Endothelial cell of umbilical vein (primary cell): ENCODE measurements at regions of chr7 and their contacts with region 1.

Region 1: DNA sequence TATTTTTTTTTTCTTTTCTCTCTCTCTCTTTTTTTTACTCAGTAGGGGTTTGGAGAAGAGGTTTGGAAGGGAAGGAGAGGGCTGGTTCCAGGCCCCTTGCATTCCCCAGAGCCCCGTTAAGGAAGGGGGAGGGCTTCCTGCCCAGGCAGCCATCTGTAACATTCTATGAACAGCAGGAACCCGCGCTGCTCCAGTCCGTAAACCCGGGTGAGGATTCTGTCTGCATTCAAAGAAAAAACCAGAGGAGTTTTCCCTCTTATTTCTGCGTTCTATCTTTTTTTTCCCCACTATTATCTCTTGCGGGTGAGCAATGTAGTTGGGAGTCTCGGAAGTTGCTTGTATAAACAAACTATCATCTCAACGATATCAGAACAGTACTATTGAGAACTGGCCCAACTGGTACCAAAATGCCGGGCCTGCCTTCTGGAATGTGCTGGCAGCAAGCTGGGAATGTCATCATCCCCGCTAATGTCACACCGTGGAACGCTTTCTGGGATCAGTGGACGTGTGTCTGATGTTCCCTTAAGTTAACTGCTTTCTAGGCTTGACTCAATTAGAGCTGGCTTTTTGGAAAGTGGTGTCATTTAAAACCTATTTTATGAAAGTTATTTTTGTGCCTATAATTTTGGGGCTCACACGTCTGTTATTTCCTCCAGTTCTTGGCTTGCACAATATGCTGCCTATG is 153.1 kb upstream of the MEOX2 start:
- DNase-seq: peak; percentile 78
- H3K4me3 ChIP-seq: peak overlapping the region in 2 of 3 experiments; percentile 2 to 37
- H3K27ac ChIP-seq: peak overlapping the region; percentile 42
- H3K4me1 ChIP-seq: peaks cover 14% of the 10 kb centered on the region
- H3K27me3 ChIP-seq: no peaks in the 10 kb centered on the region
- CTCF ChIP-seq: no peak
- POLR2A ChIP-seq: no peak

Region 2: DNA sequence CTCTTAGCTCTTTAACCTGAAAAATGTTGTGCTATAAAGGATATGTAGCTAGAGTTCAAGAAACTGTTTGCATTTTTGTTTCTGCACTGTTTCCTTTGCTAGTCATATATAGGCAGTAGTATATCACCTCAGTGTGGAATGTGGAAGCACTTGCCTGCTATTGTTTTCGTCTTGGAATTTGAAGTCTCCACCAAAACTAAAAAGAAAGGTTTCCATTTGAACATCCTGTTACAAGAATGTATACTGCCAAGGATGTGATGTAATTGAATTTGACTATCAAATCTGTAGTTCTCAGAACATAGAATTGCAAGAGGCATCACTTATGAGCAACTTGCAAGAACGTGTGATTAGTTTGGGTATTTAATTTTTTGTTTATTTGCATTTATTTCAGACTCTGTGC is 102.0 kb before region 1 on chr7:
- CTCF ChIA-PET with region 1: no interaction called
- POLR2A ChIA-PET with region 1: no interaction called
- dilution Hi-C with region 1: no loop called
- intact Hi-C with region 1: loop called (anchors 1 kb)
- DNase-seq: peak; percentile 85
- H3K4me3 ChIP-seq: no peak overlapping the region
- H3K27ac ChIP-seq: no peak overlapping the region
- H3K4me1 ChIP-seq: no peaks in the 10 kb centered on the region
- H3K27me3 ChIP-seq: no peaks in the 10 kb centered on the region
- CTCF ChIP-seq: no peak
- POLR2A ChIP-seq: no peak

Region 3: DNA sequence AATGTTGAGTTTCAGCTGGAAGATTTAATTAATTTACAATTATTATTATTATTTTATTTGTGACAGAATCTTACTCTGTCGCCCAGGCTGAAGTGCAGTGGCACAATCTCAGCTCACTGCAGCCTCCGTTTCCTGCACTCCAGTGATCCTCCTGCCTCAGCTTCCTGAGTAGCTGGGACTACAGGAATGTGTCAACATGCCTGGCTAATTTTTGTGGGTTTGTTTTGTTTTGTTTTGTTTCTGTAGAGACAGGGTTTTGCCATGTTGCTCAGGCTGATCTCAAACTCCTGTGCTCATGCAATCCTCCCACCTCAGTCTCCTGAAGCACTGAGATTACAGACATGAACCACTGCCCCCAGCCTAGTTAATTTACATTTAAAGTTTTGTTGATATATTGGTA is 59.3 kb before region 1 on chr7:
- CTCF ChIA-PET with region 1: no interaction called
- POLR2A ChIA-PET with region 1: no interaction called
- dilution Hi-C with region 1: no loop called
- intact Hi-C with region 1: loop called (anchors 5 kb)
- DNase-seq: peak; percentile 86
- H3K4me3 ChIP-seq: no peak overlapping the region
- H3K27ac ChIP-seq: no peak overlapping the region
- H3K4me1 ChIP-seq: no peaks in the 10 kb centered on the region
- H3K27me3 ChIP-seq: no peaks in the 10 kb centered on the region
- CTCF ChIP-seq: no peak
- POLR2A ChIP-seq: no peak

Region 4: GRCh38 chr7:15905251-15906040 is 65.9 kb after region 1 on chr7:
- CTCF ChIA-PET with region 1: no interaction called
- POLR2A ChIA-PET with region 1: no interaction called
- dilution Hi-C with region 1: no loop called
- intact Hi-C with region 1: no loop called
- DNase-seq: no peak
- H3K4me3 ChIP-seq: no peak overlapping the region
- H3K27ac ChIP-seq: no peak overlapping the region
- H3K4me1 ChIP-seq: no peaks in the 10 kb centered on the region
- H3K27me3 ChIP-seq: no peaks in the 10 kb centered on the region
- CTCF ChIP-seq: no peak
- POLR2A ChIP-seq: no peak

Region 5: GRCh38 chr7:15921576-15921975 is 82.0 kb after region 1 on chr7:
- CTCF ChIA-PET with region 1: no interaction called
- POLR2A ChIA-PET with region 1: no interaction called
- dilution Hi-C with region 1: no loop called
- intact Hi-C with region 1: no loop called
- DNase-seq: peak; percentile 59
- H3K4me3 ChIP-seq: peak overlapping the region in 2 of 3 experiments; percentile 28 to 40
- H3K27ac ChIP-seq: peak overlapping the region; percentile 26
- H3K4me1 ChIP-seq: peaks cover 13% of the 10 kb centered on the region
- H3K27me3 ChIP-seq: no peaks in the 10 kb centered on the region
- CTCF ChIP-seq: peak in 1 of 2 donors; percentile 1
- POLR2A ChIP-seq: no peak